PC-9 (cell line): ENCODE measurements at regions of chr1 and their contacts with region 1.

Region 1: GRCh38 chr1:201530741-201531531 is 8.0 kb upstream of the NAV1 start:
- DNase-seq: peak; percentile 48 to 78
- H3K4me3 ChIP-seq: no peak overlapping the region
- H3K27ac ChIP-seq: no peak overlapping the region
- H3K4me1 ChIP-seq: peaks cover 16% of the 10 kb centered on the region
- H3K27me3 ChIP-seq: no peaks in the 10 kb centered on the region
- CTCF ChIP-seq: peak; percentile 77

Region 2: GRCh38 chr1:201517948-201518470 is 12.9 kb before region 1 on chr1:
- CTCF ChIA-PET with region 1: no interaction called
- POLR2A ChIA-PET with region 1: no interaction called
- intact Hi-C with region 1: no loop called
- DNase-seq: no peak
- H3K4me3 ChIP-seq: no peak overlapping the region
- H3K27ac ChIP-seq: peak overlapping the region; percentile 88
- H3K4me1 ChIP-seq: peaks cover 44% of the 10 kb centered on the region
- H3K27me3 ChIP-seq: no peaks in the 10 kb centered on the region
- CTCF ChIP-seq: no peak

Region 3: GRCh38 chr1:201648066-201648906 is 117.3 kb after region 1 on chr1:
- CTCF ChIA-PET with region 1: no interaction called
- POLR2A ChIA-PET with region 1: no interaction called
- intact Hi-C with region 1: no loop called
- DNase-seq: peak; percentile 8 to 52
- H3K4me3 ChIP-seq: peak overlapping the region; percentile 55; the same call in 1 of the 2 replicates
- H3K27ac ChIP-seq: no peak overlapping the region
- H3K4me1 ChIP-seq: no peaks in the 10 kb centered on the region
- H3K27me3 ChIP-seq: peaks cover 5% of the 10 kb centered on the region; the same call in 1 of the 2 replicates
- CTCF ChIP-seq: no peak

Region 4: GRCh38 chr1:201703621-201704439 is 172.9 kb after region 1 on chr1:
- CTCF ChIA-PET with region 1: no interaction called
- POLR2A ChIA-PET with region 1: no interaction called
- intact Hi-C with region 1: loop called (anchors 1 kb)
- DNase-seq: peak; percentile 66 to 83
- H3K4me3 ChIP-seq: no peak overlapping the region
- H3K27ac ChIP-seq: no peak overlapping the region
- H3K4me1 ChIP-seq: no peaks in the 10 kb centered on the region
- H3K27me3 ChIP-seq: no peaks in the 10 kb centered on the region
- CTCF ChIP-seq: peak; percentile 96

Region 5: GRCh38 chr1:201826830-201827229 is 295.9 kb after region 1 on chr1:
- CTCF ChIA-PET with region 1: interaction called, 18 read pairs
- POLR2A ChIA-PET with region 1: no interaction called
- intact Hi-C with region 1: no loop called
- DNase-seq: no peak
- H3K4me3 ChIP-seq: no peak overlapping the region
- H3K27ac ChIP-seq: no peak overlapping the region
- H3K4me1 ChIP-seq: peaks cover 24% of the 10 kb centered on the region
- H3K27me3 ChIP-seq: no peaks in the 10 kb centered on the region
- CTCF ChIP-seq: no peak